Activated CD4-positive, alpha-beta T cell treated with anti-CD3 and anti-CD28 coated beads for 36 hours (primary cell): ENCODE measurements at regions of chr6 and their contacts with region 1.

Region 1: GRCh38 chr6:16964553-16965501 is 137.0 kb upstream of the STMND1 start:
- DNase-seq: peak; percentile 84
- ATAC-seq: peak; percentile 97
- H3K4me3 Mint-ChIP-seq: no peak overlapping the region
- H3K27ac Mint-ChIP-seq: no peak overlapping the region
- H3K4me1 Mint-ChIP-seq: peaks cover 15% of the 10 kb centered on the region
- H3K27me3 Mint-ChIP-seq: peaks cover 17% of the 10 kb centered on the region

Region 2: GRCh38 chr6:16403831-16404230 is 561.0 kb before region 1 on chr6:
- CTCF ChIA-PET with region 1: interaction called, 3 read pairs
- POLR2A ChIA-PET with region 1: no interaction called
- intact Hi-C with region 1: loop called in 1 of 2 experiments (anchors 5 kb)
- DNase-seq: no peak
- ATAC-seq: peak; percentile 55
- H3K4me3 Mint-ChIP-seq: no peak overlapping the region
- H3K27ac Mint-ChIP-seq: peak overlapping the region; percentile 3
- H3K4me1 Mint-ChIP-seq: peaks cover 17% of the 10 kb centered on the region
- H3K27me3 Mint-ChIP-seq: no peaks in the 10 kb centered on the region

Region 3: DNA sequence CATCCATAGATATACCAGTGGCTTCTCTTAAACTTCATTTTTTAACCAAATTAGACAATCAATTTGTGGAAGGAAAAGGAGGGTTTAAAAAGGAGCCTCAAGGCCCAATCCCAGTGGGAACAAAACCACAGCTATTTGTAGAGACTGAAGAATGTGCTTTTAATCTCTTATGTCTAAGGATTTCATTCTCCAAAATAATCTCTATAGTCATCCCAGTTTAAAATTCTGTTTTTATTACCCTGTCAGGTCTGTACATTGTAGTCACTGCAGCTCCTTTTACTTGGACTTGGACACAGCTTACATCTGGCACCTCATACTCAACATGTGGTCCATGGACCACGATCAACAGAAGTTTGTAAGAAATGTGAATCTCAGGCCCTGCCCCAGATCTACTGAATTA is 15.1 kb before region 1 on chr6:
- CTCF ChIA-PET with region 1: interaction called, 14 read pairs
- POLR2A ChIA-PET with region 1: no interaction called
- intact Hi-C with region 1: no loop called
- DNase-seq: no peak
- ATAC-seq: no peak
- H3K4me3 Mint-ChIP-seq: no peak overlapping the region
- H3K27ac Mint-ChIP-seq: no peak overlapping the region
- H3K4me1 Mint-ChIP-seq: peaks cover 21% of the 10 kb centered on the region
- H3K27me3 Mint-ChIP-seq: peaks cover 45% of the 10 kb centered on the region